B cell (primary cell): ENCODE measurements at regions of chr19 and their contacts with region 1.

Region 1: DNA sequence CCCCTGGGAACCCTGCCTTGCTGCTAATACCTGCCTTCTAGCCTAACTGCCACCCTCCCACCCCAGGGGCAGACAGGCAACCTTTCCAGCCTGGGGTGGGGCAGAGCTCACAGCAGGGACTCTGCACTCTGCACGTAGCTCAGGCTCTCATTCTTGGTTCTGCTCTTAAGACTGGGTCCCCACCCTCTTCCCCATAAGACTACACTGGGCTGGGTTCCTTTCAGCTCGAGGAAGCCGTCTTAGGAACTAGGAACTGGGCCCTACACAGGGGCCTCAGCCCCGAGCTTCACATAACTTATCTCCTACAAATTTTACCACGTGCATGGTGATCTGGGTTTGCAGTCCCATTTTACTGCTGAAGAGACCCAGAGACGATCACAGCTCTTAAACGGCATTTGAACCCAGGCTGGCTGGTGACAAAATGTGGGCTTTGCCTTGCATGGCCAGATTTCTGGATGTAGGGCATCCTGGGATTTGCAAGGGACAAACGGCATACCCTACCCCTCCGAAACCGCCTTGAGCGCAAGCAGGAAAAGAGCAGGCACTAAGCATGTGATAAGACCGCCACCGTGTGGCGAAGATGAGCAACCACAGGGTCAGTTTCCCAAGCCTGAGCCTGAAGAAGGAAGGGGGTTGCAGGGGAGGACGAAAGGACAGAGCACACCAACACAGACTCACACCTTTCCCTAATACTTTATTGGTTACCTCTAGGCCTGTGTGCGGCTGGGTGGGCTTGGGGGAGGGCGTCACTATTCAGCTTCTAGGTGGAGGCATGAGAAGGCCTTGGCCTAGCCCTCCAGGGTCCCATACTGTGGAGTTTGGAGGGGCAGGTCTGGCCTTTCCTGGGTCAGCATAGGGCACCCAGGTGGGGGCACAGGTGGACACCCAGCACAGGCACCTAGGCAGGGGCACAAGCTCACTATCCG is 5.1 kb downstream of the JUNB start:
- DNase-seq: peak; percentile 89
- ATAC-seq: no peak
- H3K4me3 ChIP-seq: peak overlapping the region in 4 of 5 experiments; percentile 14 to 52 (median 34)
- H3K4me3 Mint-ChIP-seq: peak overlapping the region; percentile 87
- H3K27ac ChIP-seq: peak overlapping the region; percentile 3 to 57
- H3K27ac Mint-ChIP-seq: peak overlapping the region; percentile 88
- H3K4me1 ChIP-seq: peaks cover 32 to 39% of the 10 kb centered on the region in 2 donors
- H3K4me1 Mint-ChIP-seq: peaks cover 28% of the 10 kb centered on the region
- H3K27me3 ChIP-seq: no peaks in the 10 kb centered on the region
- H3K27me3 Mint-ChIP-seq: no peaks in the 10 kb centered on the region
- CTCF ChIP-seq: peak; percentile 96

Region 2: GRCh38 chr19:12681074-12681951 is 115.1 kb before region 1 on chr19 and contains the start of gene DHPS:
- CTCF ChIA-PET with region 1: interaction called, 23 read pairs
- POLR2A ChIA-PET with region 1: interaction called, 12 read pairs
- intact Hi-C with region 1: no loop called
- DNase-seq: peak; percentile 98
- ATAC-seq: peak; percentile 75
- H3K4me3 ChIP-seq: peak within 1 kb of the TSS; percentile 73 to 90 (median 86)
- H3K4me3 Mint-ChIP-seq: peak within 1 kb of the TSS; percentile 93
- H3K27ac ChIP-seq: peak within 1 kb of the TSS; percentile 89 to 95
- H3K27ac Mint-ChIP-seq: peak within 1 kb of the TSS; percentile 94
- H3K4me1 ChIP-seq: peaks cover 9 to 17% of the 10 kb centered on the region in 2 donors
- H3K4me1 Mint-ChIP-seq: peaks cover 24% of the 10 kb centered on the region
- H3K27me3 ChIP-seq: no peaks in the 10 kb centered on the region
- H3K27me3 Mint-ChIP-seq: no peaks in the 10 kb centered on the region
- CTCF ChIP-seq: no peak
- total RNA-seq, gene DHPS: 187 and 200 TPM in 2 replicates

Region 3: GRCh38 chr19:12703046-12703445 is 93.4 kb before region 1 on chr19:
- CTCF ChIA-PET with region 1: no interaction called
- POLR2A ChIA-PET with region 1: no interaction called
- intact Hi-C with region 1: no loop called
- DNase-seq: peak; percentile 40
- ATAC-seq: no peak
- H3K4me3 ChIP-seq: no peak overlapping the region
- H3K4me3 Mint-ChIP-seq: no peak overlapping the region
- H3K27ac ChIP-seq: no peak overlapping the region
- H3K27ac Mint-ChIP-seq: no peak overlapping the region
- H3K4me1 ChIP-seq: no peaks in the 10 kb centered on the region
- H3K4me1 Mint-ChIP-seq: peaks cover 2% of the 10 kb centered on the region
- H3K27me3 ChIP-seq: no peaks in the 10 kb centered on the region
- H3K27me3 Mint-ChIP-seq: no peaks in the 10 kb centered on the region
- CTCF ChIP-seq: no peak

Region 4: GRCh38 chr19:12766051-12766521 is 30.3 kb before region 1 on chr19:
- CTCF ChIA-PET with region 1: interaction called, 1,147 read pairs
- POLR2A ChIA-PET with region 1: interaction called, 9 read pairs
- intact Hi-C with region 1: loop called (anchors 1 kb)
- DNase-seq: peak; percentile 87
- ATAC-seq: peak; percentile 65
- H3K4me3 ChIP-seq: no peak overlapping the region
- H3K4me3 Mint-ChIP-seq: no peak overlapping the region
- H3K27ac ChIP-seq: no peak overlapping the region
- H3K27ac Mint-ChIP-seq: no peak overlapping the region
- H3K4me1 ChIP-seq: peaks cover 6 to 8% of the 10 kb centered on the region in 2 donors
- H3K4me1 Mint-ChIP-seq: peaks cover 10% of the 10 kb centered on the region
- H3K27me3 ChIP-seq: no peaks in the 10 kb centered on the region
- H3K27me3 Mint-ChIP-seq: no peaks in the 10 kb centered on the region
- CTCF ChIP-seq: peak; percentile 90

Region 5: GRCh38 chr19:12782229-12783028 is 14.0 kb before region 1 on chr19:
- CTCF ChIA-PET with region 1: interaction called, 1,147 read pairs
- POLR2A ChIA-PET with region 1: interaction called, 233 read pairs
- intact Hi-C with region 1: loop called (anchors 1 kb)
- DNase-seq: peak; percentile 99
- ATAC-seq: peak; percentile 58
- H3K4me3 ChIP-seq: peak overlapping the region in 4 of 5 experiments; percentile 55 to 64 (median 57)
- H3K4me3 Mint-ChIP-seq: peak overlapping the region; percentile 89
- H3K27ac ChIP-seq: peak overlapping the region; percentile 92 to 97
- H3K27ac Mint-ChIP-seq: no peak overlapping the region
- H3K4me1 ChIP-seq: peaks cover 67 to 81% of the 10 kb centered on the region in 2 donors
- H3K4me1 Mint-ChIP-seq: peaks cover 47% of the 10 kb centered on the region
- H3K27me3 ChIP-seq: no peaks in the 10 kb centered on the region
- H3K27me3 Mint-ChIP-seq: no peaks in the 10 kb centered on the region
- CTCF ChIP-seq: no peak

Region 6: GRCh38 chr19:12994701-12995595 is 198.5 kb after region 1 on chr19 and contains the start of gene NFIX:
- CTCF ChIA-PET with region 1: no interaction called
- POLR2A ChIA-PET with region 1: no interaction called
- intact Hi-C with region 1: no loop called
- DNase-seq: peak; percentile 76
- ATAC-seq: peak; percentile 72
- H3K4me3 ChIP-seq: peak within 1 kb of the TSS; percentile 31 to 65 (median 60)
- H3K4me3 Mint-ChIP-seq: peak within 1 kb of the TSS; percentile 98
- H3K27ac ChIP-seq: no peak within 1 kb of the TSS
- H3K27ac Mint-ChIP-seq: peak within 1 kb of the TSS; percentile 88
- H3K4me1 ChIP-seq: peaks cover 10 to 11% of the 10 kb centered on the region in 2 donors
- H3K4me1 Mint-ChIP-seq: peaks cover 17% of the 10 kb centered on the region
- H3K27me3 ChIP-seq: peaks cover 0 to 24% (median 4%) of the 10 kb centered on the region in 4 experiments
- H3K27me3 Mint-ChIP-seq: peaks cover 24% of the 10 kb centered on the region
- CTCF ChIP-seq: no peak
- total RNA-seq, gene NFIX: 4.8 and 5.6 TPM in 2 replicates